Kidney (tissue), 22 donors: ENCODE measurements at regions of chr13 and their contacts with region 1.

Region 1: GRCh38 chr13:41384755-41385503 is 72.4 kb upstream of the RGCC start:
- DNase-seq: peak in 2 of 5 donors; percentile 34 to 42
- H3K4me3 ChIP-seq: no peak overlapping the region
- H3K27ac ChIP-seq: no peak overlapping the region
- H3K4me1 ChIP-seq: no peaks in the 10 kb centered on the region
- H3K27me3 ChIP-seq: no peaks in the 10 kb centered on the region
- CTCF ChIP-seq: no peak

Region 2: GRCh38 chr13:41159174-41159573 is 225.8 kb before region 1 on chr13:
- intact Hi-C with region 1: no loop called
- DNase-seq: no peak
- H3K4me3 ChIP-seq: no peak overlapping the region
- H3K27ac ChIP-seq: no peak overlapping the region
- H3K4me1 ChIP-seq: no peaks in the 10 kb centered on the region
- H3K27me3 ChIP-seq: no peaks in the 10 kb centered on the region
- CTCF ChIP-seq: no peak

Region 3: GRCh38 chr13:41652727-41653361 is 267.9 kb after region 1 on chr13:
- intact Hi-C with region 1: loop called (anchors 10 kb)
- DNase-seq: peak in 3 of 5 donors; percentile 31 to 77 (median 58)
- H3K4me3 ChIP-seq: no peak overlapping the region
- H3K27ac ChIP-seq: no peak overlapping the region
- H3K4me1 ChIP-seq: no peaks in the 10 kb centered on the region
- H3K27me3 ChIP-seq: no peaks in the 10 kb centered on the region
- CTCF ChIP-seq: peak; percentile 62